Left ventricle myocardium superior (tissue), 1 donor: ENCODE measurements at regions of chr15 and their contacts with region 1.

Region 1: DNA sequence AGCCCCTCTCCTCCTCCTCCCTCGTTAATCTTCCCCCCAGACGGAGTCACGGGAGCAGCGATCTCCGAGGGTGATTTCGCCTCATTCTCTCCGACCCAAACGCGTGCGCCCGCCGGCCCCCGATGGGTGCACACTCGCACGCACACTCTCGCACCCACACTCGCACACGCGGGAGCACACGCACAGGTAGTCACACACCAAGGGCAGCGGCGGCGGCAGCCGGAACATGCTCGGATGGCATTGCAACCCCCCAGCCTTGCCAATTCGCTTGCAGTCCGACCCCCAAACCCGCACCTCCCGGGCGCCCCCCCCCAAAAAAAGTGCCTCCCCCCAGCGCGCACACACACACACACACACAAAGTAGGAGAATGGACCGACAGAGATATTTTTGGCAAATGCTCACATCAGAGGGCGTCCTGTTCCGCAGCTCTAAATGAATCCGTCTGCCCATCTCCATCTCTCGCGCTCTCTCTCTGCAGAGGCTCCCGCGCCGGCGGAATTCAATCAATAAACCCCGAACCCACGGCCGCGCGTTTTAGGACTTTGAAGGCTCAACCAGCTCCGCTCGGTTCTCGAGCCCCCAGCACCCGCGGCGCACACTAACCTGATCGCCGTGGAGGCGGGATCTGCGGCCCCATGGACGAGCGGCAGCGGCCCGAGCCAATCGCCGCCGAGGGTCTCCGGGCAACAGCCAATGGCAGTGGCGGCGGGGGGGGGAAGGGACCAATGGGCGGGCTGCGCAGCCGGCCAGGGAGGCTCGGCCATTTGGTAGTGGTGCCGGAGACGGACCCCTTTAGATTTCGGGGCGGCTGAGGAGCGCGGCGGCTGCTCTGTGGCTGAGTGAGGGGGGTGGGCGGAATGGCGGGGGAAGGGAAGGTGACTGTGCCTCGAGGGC is at the start of gene ANP32A:
- DNase-seq: peak; percentile 98
- ATAC-seq: peak; percentile 80
- total RNA-seq, gene ANP32A: 138 TPM

Region 2: DNA sequence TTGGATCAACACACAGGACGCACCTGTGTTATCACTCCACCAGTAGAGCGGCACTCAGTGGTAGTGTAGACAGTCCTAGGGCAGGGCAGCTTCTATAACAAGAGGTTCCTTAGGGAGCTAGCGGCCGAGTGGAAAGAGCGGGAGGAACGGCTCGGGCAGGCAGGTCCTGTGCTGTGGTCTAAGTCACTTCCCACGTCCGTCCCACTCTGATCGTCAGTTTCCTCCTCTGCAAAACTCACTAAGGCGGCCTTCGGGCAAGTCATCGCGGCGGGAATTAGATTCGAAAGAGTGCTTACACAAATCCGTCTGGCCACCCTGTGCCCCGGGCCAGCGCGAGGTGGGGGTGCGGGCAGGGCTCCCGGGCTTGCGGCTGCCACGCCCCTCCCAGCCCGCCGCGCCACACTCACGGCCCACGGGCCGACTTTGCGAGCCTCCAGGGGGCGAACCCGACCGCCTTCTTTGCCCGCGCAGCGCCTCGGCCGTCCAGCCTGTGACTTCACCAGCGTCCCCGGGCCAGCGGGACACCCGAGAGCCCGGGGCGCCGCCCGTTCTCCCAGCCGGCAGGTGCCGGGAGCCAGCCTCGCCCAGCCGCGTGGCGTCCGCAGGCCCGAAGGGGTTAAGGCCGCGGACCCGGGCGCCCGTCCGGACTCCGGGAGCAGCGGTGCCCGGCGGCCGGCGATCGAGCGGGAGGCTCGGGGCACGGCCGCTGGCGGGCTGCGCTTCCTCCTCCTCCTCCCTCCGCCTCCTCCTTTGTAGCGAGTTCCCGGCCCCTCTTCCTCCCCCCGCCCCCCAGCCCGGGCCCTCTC is 242.2 kb before region 1 on chr15:
- intact Hi-C with region 1: loop called (anchors 10 kb)
- DNase-seq: peak; percentile 90
- ATAC-seq: peak; percentile 83

Region 3: GRCh38 chr15:69194025-69194827 is 373.7 kb after region 1 on chr15:
- intact Hi-C with region 1: no loop called
- DNase-seq: no peak
- ATAC-seq: peak; percentile 70